CD8-positive, alpha-beta T cell (primary cell): ENCODE measurements at regions of chr12 and their contacts with region 1.

Region 1: DNA sequence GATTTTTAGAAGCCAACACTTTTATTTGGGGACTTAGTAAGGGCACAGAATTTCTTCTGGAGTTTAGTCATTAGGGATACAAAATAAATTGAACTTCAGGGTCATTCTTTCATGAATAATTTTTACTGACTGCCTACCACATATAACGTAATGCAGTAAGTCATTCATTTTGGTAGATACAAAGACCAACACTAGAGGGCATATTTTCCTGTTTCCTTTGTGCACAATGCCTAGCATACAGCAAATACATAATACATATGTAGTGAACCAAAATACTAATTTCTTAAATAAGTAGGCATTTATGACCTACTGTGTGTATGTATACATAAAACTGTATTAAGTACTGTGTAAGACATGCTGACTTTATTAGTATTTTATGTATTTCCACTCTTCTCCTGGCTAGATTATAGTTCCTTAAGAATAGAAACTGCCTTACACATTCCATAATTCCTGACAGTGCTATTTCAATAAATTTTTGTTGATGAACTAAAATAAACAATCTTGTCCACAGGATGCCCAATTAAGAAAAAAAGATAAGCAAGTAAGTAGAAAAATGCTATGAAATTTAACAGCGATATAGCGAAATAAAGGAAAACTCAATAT is 47.9 kb downstream of the PPP1R12A start:
- DNase-seq: peak in 2 of 9 experiments; percentile 57 to 70
- ATAC-seq: peak; percentile 75
- H3K4me3 ChIP-seq: no peak overlapping the region
- H3K4me3 Mint-ChIP-seq: no peak overlapping the region
- H3K27ac ChIP-seq: no peak overlapping the region
- H3K27ac Mint-ChIP-seq: no peak overlapping the region
- H3K4me1 ChIP-seq: peaks cover 16% of the 10 kb centered on the region
- H3K4me1 Mint-ChIP-seq: peaks cover 78% of the 10 kb centered on the region
- H3K27me3 ChIP-seq: no peaks in the 10 kb centered on the region
- H3K27me3 Mint-ChIP-seq: no peaks in the 10 kb centered on the region
- CTCF ChIP-seq: peak; percentile 78

Region 2: GRCh38 chr12:79873201-79873600 is 13.8 kb before region 1 on chr12:
- CTCF ChIA-PET with region 1: interaction called, 3 read pairs
- POLR2A ChIA-PET with region 1: interaction called, 3 read pairs
- intact Hi-C with region 1: loop called in 1 of 2 experiments (anchors 2 kb)
- DNase-seq: no peak
- ATAC-seq: no peak
- H3K4me3 ChIP-seq: no peak overlapping the region
- H3K4me3 Mint-ChIP-seq: no peak overlapping the region
- H3K27ac ChIP-seq: no peak overlapping the region
- H3K27ac Mint-ChIP-seq: no peak overlapping the region
- H3K4me1 ChIP-seq: no peaks in the 10 kb centered on the region
- H3K4me1 Mint-ChIP-seq: peaks cover 69% of the 10 kb centered on the region
- H3K27me3 ChIP-seq: no peaks in the 10 kb centered on the region
- H3K27me3 Mint-ChIP-seq: no peaks in the 10 kb centered on the region
- CTCF ChIP-seq: no peak

Region 3: DNA sequence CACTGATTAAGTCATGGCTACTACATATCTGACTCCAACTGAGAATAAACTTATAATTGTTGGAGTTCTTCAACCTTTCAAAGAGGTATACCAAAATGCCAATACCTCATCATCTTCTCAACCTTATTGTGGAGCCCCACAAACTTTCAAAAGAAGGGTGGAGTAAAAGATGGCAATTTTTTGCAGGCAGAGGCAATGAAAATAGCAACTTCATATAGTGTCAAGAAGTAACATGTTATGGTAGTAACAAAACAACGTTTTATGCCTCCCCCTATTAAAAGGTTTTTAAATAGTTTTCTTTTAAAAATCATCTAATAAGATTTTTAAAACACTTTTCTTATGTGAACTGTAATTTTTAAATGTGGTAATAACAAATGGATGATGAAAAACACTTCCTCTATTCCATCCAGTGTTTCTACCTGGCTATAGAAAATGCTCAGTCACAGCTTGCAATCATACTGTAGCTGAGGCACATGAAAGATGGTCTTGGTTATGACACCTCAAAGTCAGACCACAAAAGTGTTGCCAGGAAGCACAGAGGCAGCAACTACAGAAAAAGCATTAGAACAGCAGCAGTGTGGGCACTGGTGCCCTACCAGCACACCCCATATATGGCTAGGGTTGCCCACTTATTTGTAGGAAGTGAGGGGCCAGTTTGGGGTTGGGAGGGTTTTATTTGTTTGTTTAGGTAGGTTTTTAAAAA is 40.9 kb after region 1 on chr12:
- CTCF ChIA-PET with region 1: no interaction called
- POLR2A ChIA-PET with region 1: no interaction called
- intact Hi-C with region 1: loop called (anchors 1 to 5 kb)
- DNase-seq: peak; percentile 18 to 87 (median 51)
- ATAC-seq: peak; percentile 97
- H3K4me3 ChIP-seq: no peak overlapping the region
- H3K4me3 Mint-ChIP-seq: peak overlapping the region; percentile 16
- H3K27ac ChIP-seq: peak overlapping the region in 1 of 2 experiments; percentile 53
- H3K27ac Mint-ChIP-seq: peak overlapping the region; percentile 72
- H3K4me1 ChIP-seq: peaks cover 48% of the 10 kb centered on the region
- H3K4me1 Mint-ChIP-seq: peaks cover 67% of the 10 kb centered on the region
- H3K27me3 ChIP-seq: no peaks in the 10 kb centered on the region
- H3K27me3 Mint-ChIP-seq: no peaks in the 10 kb centered on the region
- CTCF ChIP-seq: no peak

Region 4: DNA sequence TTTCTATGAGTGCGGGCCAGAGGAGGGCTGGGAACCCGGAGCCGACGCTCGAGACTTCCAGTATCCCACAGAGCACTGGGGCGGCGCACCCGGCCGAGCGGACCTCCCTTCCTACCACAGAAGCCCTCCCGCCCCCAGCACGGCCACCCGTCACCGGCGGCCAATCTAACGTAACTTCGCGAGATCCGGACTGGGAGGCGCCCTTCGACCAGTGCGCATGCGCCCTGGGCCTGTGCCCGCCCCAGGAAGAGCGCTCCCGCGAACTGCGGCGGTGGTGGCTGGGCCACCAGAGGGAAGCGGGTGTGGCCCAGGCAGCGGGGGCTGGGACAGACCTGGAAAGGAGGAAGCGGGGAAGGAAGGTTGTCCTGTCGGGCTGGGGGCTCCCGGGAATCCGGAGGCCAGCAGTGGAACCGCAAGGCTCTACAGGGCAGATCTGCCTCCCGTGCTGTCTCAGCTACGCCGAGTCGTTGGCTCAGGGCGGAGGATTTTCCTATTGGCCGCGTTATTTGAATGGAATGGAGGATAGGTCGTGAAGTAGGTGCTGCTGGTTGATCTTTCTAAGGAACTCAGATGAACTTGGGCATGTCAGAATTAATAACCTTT is 48.1 kb after region 1 on chr12 and contains the start of gene PPP1R12A:
- CTCF ChIA-PET with region 1: no interaction called
- POLR2A ChIA-PET with region 1: interaction called, 5 read pairs
- intact Hi-C with region 1: loop called in 1 of 2 experiments (anchors 1 kb)
- DNase-seq: peak; percentile 83 to 97 (median 93)
- ATAC-seq: peak; percentile 81
- H3K4me3 ChIP-seq: peak within 1 kb of the TSS; percentile 84 to 94
- H3K4me3 Mint-ChIP-seq: peak within 1 kb of the TSS; percentile 99
- H3K27ac ChIP-seq: peak within 1 kb of the TSS; percentile 83 to 92
- H3K27ac Mint-ChIP-seq: peak within 1 kb of the TSS; percentile 99
- H3K4me1 ChIP-seq: peaks cover 26% of the 10 kb centered on the region
- H3K4me1 Mint-ChIP-seq: peaks cover 40% of the 10 kb centered on the region
- H3K27me3 ChIP-seq: no peaks in the 10 kb centered on the region
- H3K27me3 Mint-ChIP-seq: no peaks in the 10 kb centered on the region
- CTCF ChIP-seq: no peak
- total RNA-seq, gene PPP1R12A: 67.6 to 72.4 TPM

Region 5: DNA sequence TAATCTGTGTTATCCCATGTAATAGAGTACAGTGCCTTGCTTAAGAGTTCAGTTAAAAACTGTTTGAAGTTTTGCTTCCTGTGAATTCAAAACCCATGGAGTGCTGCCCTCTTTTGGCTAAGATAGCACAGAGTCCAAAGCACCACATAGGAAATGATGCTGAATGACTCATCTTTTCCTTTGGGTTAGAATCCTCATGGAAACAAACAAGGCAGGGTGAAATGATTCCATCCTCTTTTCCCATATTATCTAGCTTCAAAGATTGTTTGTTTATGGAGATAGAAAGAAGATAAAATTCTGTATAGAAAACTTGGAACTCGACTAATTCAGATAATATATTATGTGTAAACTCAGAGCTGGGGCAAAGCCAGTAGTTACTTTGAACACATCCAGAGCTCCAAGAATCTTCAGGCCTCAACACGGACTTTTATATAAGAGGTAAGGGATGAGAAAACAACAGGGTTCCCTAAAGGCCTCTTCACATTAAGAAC is 299.8 kb after region 1 on chr12:
- CTCF ChIA-PET with region 1: interaction called, 4 read pairs
- POLR2A ChIA-PET with region 1: no interaction called
- intact Hi-C with region 1: loop called (anchors 1 to 5 kb)
- DNase-seq: peak in 6 of 9 experiments; percentile 4 to 65 (median 28)
- ATAC-seq: peak; percentile 54
- H3K4me3 ChIP-seq: no peak overlapping the region
- H3K4me3 Mint-ChIP-seq: no peak overlapping the region
- H3K27ac ChIP-seq: no peak overlapping the region
- H3K27ac Mint-ChIP-seq: no peak overlapping the region
- H3K4me1 ChIP-seq: no peaks in the 10 kb centered on the region
- H3K4me1 Mint-ChIP-seq: no peaks in the 10 kb centered on the region
- H3K27me3 ChIP-seq: no peaks in the 10 kb centered on the region
- H3K27me3 Mint-ChIP-seq: peaks cover 2% of the 10 kb centered on the region
- CTCF ChIP-seq: peak; percentile 62

Region 6: DNA sequence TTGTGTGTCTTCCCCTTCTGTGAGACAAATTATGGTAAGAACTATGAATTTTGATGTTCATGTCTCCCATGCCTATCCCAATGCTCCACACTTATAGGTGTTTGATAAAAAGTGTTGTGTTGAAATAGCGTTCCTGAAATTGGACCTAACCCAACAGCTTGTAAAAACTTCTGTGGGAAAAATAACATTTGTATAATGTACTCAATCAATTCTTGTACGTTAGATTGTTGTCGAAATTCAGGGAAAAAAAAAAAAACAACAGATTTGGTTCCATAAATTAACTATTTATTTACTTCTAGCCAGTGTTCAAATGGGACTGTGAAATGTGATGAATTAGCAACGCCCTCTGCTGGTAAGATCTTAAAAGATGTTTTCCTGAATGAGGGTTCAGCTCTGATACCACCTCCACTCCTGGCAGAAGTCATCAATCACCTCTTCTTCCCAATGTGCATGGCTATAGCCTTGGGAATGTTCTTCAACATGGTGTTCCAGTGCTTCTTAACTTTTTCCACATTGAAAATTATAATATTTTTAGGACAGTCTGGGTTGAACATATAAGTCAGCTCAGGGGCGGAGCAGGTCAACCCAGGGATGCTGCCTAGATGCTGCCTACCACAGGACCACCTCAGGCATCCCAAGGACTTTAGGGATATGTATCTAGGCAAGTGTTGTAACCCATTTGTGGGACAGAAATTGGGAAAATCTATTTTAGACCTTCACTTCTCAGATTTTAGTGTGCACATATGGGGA is 383.0 kb after region 1 on chr12:
- CTCF ChIA-PET with region 1: no interaction called
- POLR2A ChIA-PET with region 1: no interaction called
- intact Hi-C with region 1: loop called (anchors 2 to 10 kb)
- DNase-seq: peak in 2 of 9 experiments; percentile 30 to 40
- ATAC-seq: no peak
- H3K4me3 ChIP-seq: no peak overlapping the region
- H3K4me3 Mint-ChIP-seq: no peak overlapping the region
- H3K27ac ChIP-seq: no peak overlapping the region
- H3K27ac Mint-ChIP-seq: no peak overlapping the region
- H3K4me1 ChIP-seq: no peaks in the 10 kb centered on the region
- H3K4me1 Mint-ChIP-seq: no peaks in the 10 kb centered on the region
- H3K27me3 ChIP-seq: no peaks in the 10 kb centered on the region
- H3K27me3 Mint-ChIP-seq: peaks cover 7% of the 10 kb centered on the region
- CTCF ChIP-seq: peak; percentile 53